MCF 10A (cell line): ENCODE measurements at regions of chr15 and their contacts with region 1.

Region 1: DNA sequence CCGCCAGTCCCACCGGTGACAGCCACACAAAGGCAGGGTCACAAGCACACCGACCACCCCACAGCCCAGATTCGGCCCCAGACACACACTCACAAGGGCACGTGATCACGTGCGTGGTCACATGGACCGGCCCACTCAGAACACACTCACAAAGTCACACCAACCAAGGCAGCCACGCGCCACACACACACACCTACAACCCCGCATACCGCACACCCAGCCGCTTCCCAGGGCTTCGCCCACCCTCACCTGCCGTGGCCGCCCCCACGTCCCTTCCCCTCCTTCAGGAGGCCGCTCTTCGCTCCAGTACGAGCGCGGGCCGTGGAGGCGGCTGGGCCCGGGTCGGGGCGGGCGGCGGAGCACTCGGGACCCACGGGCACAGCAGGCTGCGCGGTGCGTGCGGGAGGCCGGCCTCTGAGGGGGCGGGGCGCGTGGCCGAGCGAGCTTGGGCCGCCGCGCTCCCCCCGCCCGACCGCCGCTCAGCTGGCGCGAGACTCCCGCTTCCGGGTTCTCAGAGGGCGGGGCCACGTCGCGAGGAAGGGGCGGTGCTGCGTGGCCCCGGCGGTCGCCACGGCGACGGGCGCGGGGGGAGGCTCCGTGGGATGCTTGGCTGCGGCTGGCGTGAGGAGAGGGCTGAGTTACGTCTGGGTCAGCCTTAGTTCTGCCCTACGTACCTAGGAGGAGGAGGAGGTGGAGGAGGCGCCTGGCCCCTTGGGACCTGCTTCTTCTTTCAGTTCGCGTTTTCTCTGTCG is at the start of gene SPG21:
- DNase-seq: peak; percentile 92
- H3K4me3 Mint-ChIP-seq: peak within 1 kb of the TSS; percentile 98
- H3K27ac Mint-ChIP-seq: peak within 1 kb of the TSS; percentile 96
- H3K4me1 Mint-ChIP-seq: peaks cover 6% of the 10 kb centered on the region
- H3K27me3 Mint-ChIP-seq: no peaks in the 10 kb centered on the region
- CTCF ChIP-seq: no peak
- total RNA-seq, gene SPG21: 63.1 and 70.4 TPM in 2 replicates

Region 2: DNA sequence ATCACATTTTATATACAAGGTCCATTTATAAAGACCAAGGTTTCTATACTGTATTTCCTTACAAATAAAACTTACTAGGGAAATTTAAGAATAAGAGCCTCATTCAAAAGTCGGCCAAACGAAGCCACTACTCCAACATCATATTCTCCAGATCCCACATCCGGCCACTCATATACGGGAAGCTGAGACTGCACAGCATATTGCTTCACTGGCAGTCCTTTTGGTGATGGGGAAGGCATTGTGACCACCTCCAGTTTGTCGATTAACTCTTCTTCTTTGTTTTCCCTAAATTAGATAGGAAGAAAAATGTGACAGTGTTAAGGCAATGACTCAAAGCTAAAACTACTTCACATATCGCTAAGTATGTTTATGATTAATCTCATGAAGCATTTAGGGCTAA is 37.2 kb after region 1 on chr15:
- CTCF ChIA-PET with region 1: no interaction called
- POLR2A ChIA-PET with region 1: interaction called, 12 read pairs
- intact Hi-C with region 1: no loop called
- DNase-seq: no peak
- H3K4me3 Mint-ChIP-seq: no peak overlapping the region
- H3K27ac Mint-ChIP-seq: no peak overlapping the region
- H3K4me1 Mint-ChIP-seq: peaks cover 27% of the 10 kb centered on the region
- H3K27me3 Mint-ChIP-seq: no peaks in the 10 kb centered on the region
- CTCF ChIP-seq: no peak

Region 3: GRCh38 chr15:65054333-65055200 is 65.0 kb after region 1 on chr15:
- CTCF ChIA-PET with region 1: no interaction called
- POLR2A ChIA-PET with region 1: no interaction called
- intact Hi-C with region 1: no loop called
- DNase-seq: peak; percentile 63
- H3K4me3 Mint-ChIP-seq: no peak overlapping the region
- H3K27ac Mint-ChIP-seq: no peak overlapping the region
- H3K4me1 Mint-ChIP-seq: peaks cover 4% of the 10 kb centered on the region
- H3K27me3 Mint-ChIP-seq: no peaks in the 10 kb centered on the region
- CTCF ChIP-seq: peak; percentile 83